K562 (cell line): ENCODE measurements at regions of chr6 and their contacts with region 1.

Region 1: GRCh38 chr6:30672445-30673253 is at the start of gene DHX16:
- DNase-seq: peak; percentile 85 to 99 (median 90)
- ATAC-seq: peak; percentile 89
- H3K4me3 ChIP-seq: peak within 1 kb of the TSS; percentile 83
- H3K27ac ChIP-seq: peak within 1 kb of the TSS; percentile 60
- H3K4me1 ChIP-seq: peaks cover 7 to 27% of the 10 kb centered on the region in 2 experiments
- H3K27me3 ChIP-seq: no peaks in the 10 kb centered on the region
- CTCF ChIP-seq: peak; percentile 85 to 98 (median 97)
- EP300 ChIP-seq: peak; percentile 58; the same call in 1 of the 2 replicates
- POLR2A ChIP-seq: peak; percentile 81
- RAD21 ChIP-seq: peak; percentile 76 to 77
- polyA plus RNA-seq, gene DHX16: 14.6 to 15.3 TPM

Region 2: GRCh38 chr6:30556066-30556905 is 116.4 kb before region 1 on chr6 and contains the start of gene GNL1:
- CTCF ChIA-PET with region 1: no interaction called
- POLR2A ChIA-PET with region 1: interaction called, 3 read pairs
- in situ Hi-C with region 1: no loop called
- intact Hi-C with region 1: loop called (anchors 5 kb)
- DNase-seq: peak; percentile 97 to 99 (median 98)
- ATAC-seq: peak; percentile 90
- H3K4me3 ChIP-seq: peak within 1 kb of the TSS; percentile 80
- H3K27ac ChIP-seq: peak within 1 kb of the TSS; percentile 94
- H3K4me1 ChIP-seq: peaks cover 17 to 23% of the 10 kb centered on the region in 2 experiments; a peak in 4 of 5 replicates
- H3K27me3 ChIP-seq: no peaks in the 10 kb centered on the region
- CTCF ChIP-seq: no peak
- EP300 ChIP-seq: no peak
- POLR2A ChIP-seq: peak; percentile 8
- RAD21 ChIP-seq: no peak
- polyA plus RNA-seq, gene GNL1: 0.73 to 1.3 TPM

Region 3: DNA sequence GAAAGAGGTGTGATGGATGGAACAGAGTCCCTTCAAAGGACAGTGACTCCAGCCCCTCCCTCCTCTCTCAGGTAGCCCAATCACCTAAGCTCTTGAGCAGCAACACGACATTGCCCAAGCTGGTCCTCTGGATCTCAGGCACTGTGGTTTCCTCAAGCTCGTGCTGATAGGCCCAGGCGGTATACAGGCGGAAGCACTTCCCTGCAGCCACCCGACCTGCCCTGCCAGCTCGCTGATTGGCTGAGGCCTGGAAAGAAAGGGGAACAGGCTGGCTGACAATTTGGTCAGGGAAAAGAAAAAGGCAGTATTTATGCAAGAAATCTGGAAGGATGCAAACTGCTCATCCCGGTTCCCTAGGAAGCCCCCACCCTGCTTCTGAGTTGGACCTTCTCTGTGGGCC is 16.1 kb before region 1 on chr6:
- CTCF ChIA-PET with region 1: no interaction called
- POLR2A ChIA-PET with region 1: interaction called, 10 read pairs
- in situ Hi-C with region 1: no loop called
- intact Hi-C with region 1: no loop called
- DNase-seq: no peak
- ATAC-seq: no peak
- H3K4me3 ChIP-seq: no peak overlapping the region
- H3K27ac ChIP-seq: no peak overlapping the region
- H3K4me1 ChIP-seq: no peaks in the 10 kb centered on the region; a peak in 1 of 5 replicates
- H3K27me3 ChIP-seq: no peaks in the 10 kb centered on the region
- CTCF ChIP-seq: no peak
- EP300 ChIP-seq: no peak
- POLR2A ChIP-seq: no peak
- RAD21 ChIP-seq: no peak

Region 4: GRCh38 chr6:30857549-30857948 is 184.9 kb after region 1 on chr6:
- CTCF ChIA-PET with region 1: no interaction called
- POLR2A ChIA-PET with region 1: no interaction called
- in situ Hi-C with region 1: no loop called
- intact Hi-C with region 1: no loop called
- DNase-seq: peak in 1 of 4 experiments; percentile 4
- ATAC-seq: no peak
- H3K4me3 ChIP-seq: no peak overlapping the region
- H3K27ac ChIP-seq: no peak overlapping the region
- H3K4me1 ChIP-seq: no peaks in the 10 kb centered on the region; a peak in 1 of 5 replicates
- H3K27me3 ChIP-seq: no peaks in the 10 kb centered on the region
- CTCF ChIP-seq: no peak
- EP300 ChIP-seq: no peak
- POLR2A ChIP-seq: no peak
- RAD21 ChIP-seq: no peak